AG04450 (cell line): ENCODE measurements at regions of chr15 and their contacts with region 1.

Region 1: GRCh38 chr15:68177742-68178141 is 27.4 kb downstream of the CALML4 start:
- DNase-seq: no peak
- H3K4me3 ChIP-seq: no peak overlapping the region
- H3K27ac ChIP-seq: no peak overlapping the region
- H3K27me3 ChIP-seq: no peaks in the 10 kb centered on the region
- CTCF ChIP-seq: no peak

Region 2: GRCh38 chr15:68025835-68026424 is 151.8 kb before region 1 on chr15:
- CTCF ChIA-PET with region 1: no interaction called
- POLR2A ChIA-PET with region 1: no interaction called
- DNase-seq: no peak
- H3K4me3 ChIP-seq: no peak overlapping the region
- H3K27ac ChIP-seq: no peak overlapping the region
- H3K27me3 ChIP-seq: peaks cover 11% of the 10 kb centered on the region
- CTCF ChIP-seq: no peak

Region 3: DNA sequence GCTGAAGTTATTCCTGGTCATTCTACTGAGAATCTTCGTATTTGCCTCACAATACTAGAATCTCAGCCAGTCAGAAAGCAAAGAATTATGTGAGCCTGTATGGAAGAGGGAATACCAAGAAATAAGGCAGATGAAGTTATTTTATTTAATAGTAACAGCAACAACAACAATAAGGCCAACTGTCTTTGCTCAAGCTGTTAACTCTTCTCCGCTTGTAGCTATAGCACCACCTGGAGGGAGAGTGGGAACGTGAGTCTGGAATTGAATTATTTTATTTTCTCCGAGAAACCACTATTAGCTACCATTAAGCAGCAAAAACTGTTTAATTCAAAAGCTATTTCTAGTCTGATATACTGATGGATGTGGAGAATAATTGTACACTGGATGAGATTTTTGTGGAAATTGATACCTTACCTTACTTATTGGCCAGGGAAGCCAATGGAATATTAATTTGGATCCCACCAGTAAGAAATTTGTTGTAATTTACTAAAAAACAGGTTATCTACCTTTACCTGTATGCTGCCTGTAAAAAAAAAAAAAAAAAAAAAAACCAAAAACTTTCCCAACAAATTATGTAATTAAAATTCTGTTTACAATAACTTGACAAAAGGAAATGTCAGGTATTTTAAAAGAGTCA is 22.7 kb before region 1 on chr15:
- CTCF ChIA-PET with region 1: interaction called, 17 read pairs
- POLR2A ChIA-PET with region 1: no interaction called
- DNase-seq: peak; percentile 34
- H3K4me3 ChIP-seq: no peak overlapping the region
- H3K27ac ChIP-seq: no peak overlapping the region
- H3K27me3 ChIP-seq: no peaks in the 10 kb centered on the region
- CTCF ChIP-seq: peak; percentile 85